AG04450 (cell line): ENCODE measurements at regions of chr2 and their contacts with region 1.

Region 1: GRCh38 chr2:33475224-33476130 is 972 bp upstream of the RASGRP3 start:
- DNase-seq: peak; percentile 59
- H3K4me3 ChIP-seq: peak overlapping the region; percentile 73
- H3K27ac ChIP-seq: peak overlapping the region; percentile 89
- H3K27me3 ChIP-seq: no peaks in the 10 kb centered on the region
- CTCF ChIP-seq: peak; percentile 86

Region 2: DNA sequence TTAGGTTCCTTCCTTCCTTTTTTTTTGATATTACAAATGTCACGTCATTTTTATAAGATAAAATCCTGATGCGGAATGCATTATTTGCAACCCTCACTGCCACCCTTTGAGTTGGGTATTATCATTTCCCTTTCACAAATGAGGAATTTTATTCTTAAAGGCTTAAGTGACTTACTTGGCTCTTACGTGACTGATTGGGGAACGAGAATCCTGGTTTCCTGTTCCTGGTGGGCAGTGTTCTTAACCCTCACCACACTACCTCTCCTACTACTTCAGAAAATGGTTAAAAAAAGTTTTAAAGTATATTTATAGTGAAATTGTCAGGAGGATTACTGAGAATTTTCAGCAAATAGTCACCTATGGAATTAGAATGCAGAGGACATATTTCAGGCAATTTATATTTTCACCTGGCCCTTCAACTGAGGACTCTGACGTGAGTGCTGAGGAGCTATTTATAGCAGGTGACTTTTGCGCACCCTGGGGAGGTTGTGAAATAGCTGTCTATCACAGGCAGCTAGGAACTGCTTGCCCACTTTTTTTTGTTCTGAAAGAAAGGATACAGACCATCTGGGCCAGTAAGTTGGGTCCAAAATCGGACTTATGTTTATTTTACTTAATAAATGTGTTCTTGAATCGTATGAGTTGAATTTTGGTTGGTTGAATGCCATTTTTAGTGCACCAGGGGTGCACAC is 17.8 kb before region 1 on chr2:
- CTCF ChIA-PET with region 1: interaction called, 12 read pairs
- POLR2A ChIA-PET with region 1: interaction called, 4 read pairs
- DNase-seq: no peak
- H3K4me3 ChIP-seq: no peak overlapping the region
- H3K27ac ChIP-seq: no peak overlapping the region
- H3K27me3 ChIP-seq: no peaks in the 10 kb centered on the region
- CTCF ChIP-seq: no peak

Region 3: DNA sequence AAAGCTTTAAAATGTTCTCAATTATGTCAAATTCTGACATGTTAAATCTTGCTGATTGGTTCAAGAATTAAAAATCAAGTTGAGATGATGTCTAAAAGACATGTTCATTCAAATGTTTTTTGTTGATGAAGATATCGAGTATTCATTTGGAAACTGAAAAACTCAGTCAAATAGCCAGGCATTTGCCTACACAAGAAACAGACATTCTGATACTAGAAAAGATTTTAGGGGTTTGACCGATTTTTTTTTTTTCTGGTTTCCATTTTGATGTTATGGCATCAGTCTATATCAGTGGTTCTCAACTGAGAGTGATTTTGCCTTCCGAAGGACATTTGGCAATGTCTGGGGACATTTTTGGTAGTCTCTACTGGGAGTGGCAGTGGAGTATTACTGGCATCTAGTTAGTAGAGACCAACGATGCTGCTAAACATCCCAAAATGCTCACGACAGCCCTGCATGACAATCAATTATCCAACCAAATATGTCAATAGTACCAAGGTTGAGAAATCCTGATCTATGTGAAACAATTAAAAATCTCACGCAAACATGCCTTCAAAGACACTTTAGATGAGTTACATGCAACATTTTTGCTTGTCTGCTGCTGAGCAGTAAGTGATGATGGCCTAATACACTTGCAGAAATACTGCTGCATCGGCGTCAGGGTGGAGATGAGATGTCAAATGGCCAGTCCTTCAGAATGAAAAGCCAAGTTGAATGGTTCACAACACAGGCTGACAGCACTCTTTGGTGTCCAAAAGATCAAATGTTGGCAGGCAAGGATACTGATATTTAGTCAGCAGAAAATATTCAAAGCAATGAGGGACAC is 13.5 kb after region 1 on chr2:
- CTCF ChIA-PET with region 1: interaction called, 13 read pairs
- POLR2A ChIA-PET with region 1: interaction called, 4 read pairs
- DNase-seq: no peak
- H3K4me3 ChIP-seq: no peak overlapping the region
- H3K27ac ChIP-seq: no peak overlapping the region
- H3K27me3 ChIP-seq: no peaks in the 10 kb centered on the region
- CTCF ChIP-seq: no peak